Activated CD4-positive, alpha-beta T cell treated with anti-CD3 and anti-CD28 coated beads for 36 hours (primary cell): ENCODE measurements at regions of chr22 and their contacts with region 1.

Region 1: GRCh38 chr22:41857155-41857859 is 24.4 kb downstream of the SREBF2 start:
- DNase-seq: peak; percentile 89
- ATAC-seq: peak; percentile 71
- H3K4me3 Mint-ChIP-seq: no peak overlapping the region
- H3K27ac Mint-ChIP-seq: peak overlapping the region; percentile 95
- H3K4me1 Mint-ChIP-seq: peaks cover 76% of the 10 kb centered on the region
- H3K27me3 Mint-ChIP-seq: no peaks in the 10 kb centered on the region

Region 2: GRCh38 chr22:41800348-41801146 is 56.8 kb before region 1 on chr22 and contains the start of gene CCDC134:
- CTCF ChIA-PET with region 1: interaction called, 4 read pairs
- POLR2A ChIA-PET with region 1: interaction called, 8 read pairs
- intact Hi-C with region 1: loop called in 1 of 2 experiments (anchors 1 kb)
- DNase-seq: peak; percentile 95
- ATAC-seq: peak; percentile 98
- H3K4me3 Mint-ChIP-seq: peak within 1 kb of the TSS; percentile 91
- H3K27ac Mint-ChIP-seq: peak within 1 kb of the TSS; percentile 96
- H3K4me1 Mint-ChIP-seq: peaks cover 38% of the 10 kb centered on the region
- H3K27me3 Mint-ChIP-seq: no peaks in the 10 kb centered on the region
- total RNA-seq, gene CCDC134: 14.7 to 15.2 TPM

Region 3: DNA sequence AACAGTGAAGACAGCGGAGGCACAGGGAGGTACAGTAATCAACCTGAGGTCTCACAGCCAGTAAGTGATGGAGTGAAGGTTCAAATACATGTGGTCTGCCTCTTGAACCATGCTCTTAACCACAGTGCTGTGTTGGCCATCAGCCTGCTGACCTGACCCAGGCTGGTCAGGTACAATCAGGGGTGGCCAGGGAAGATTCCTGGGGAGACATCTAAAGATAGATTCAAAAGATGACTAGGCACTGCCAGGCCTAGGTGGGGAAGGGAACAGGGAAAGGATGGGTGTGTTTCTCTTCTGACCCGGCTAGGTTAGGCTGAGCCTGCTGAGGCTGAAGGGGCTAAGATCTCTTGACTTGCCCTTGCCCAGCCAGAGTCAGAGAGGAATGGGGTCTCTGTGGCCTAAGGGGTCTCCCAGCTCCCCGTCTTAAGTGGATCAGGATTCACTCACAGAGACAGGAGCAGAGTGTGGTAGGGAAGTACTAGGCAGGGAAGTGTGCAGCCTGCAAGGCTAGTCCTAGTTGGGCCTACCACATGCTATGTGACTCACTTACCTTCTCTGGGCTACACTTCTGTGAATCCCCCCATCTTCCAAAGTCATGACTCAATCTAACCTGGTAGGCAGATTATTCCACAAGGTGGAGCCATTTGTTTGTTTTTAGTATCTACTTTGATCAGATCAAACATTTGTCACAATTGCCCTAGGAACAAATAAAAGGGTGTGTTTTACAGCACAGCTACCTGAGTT is 34.8 kb before region 1 on chr22:
- CTCF ChIA-PET with region 1: interaction called, 17 read pairs
- POLR2A ChIA-PET with region 1: interaction called, 15 read pairs
- intact Hi-C with region 1: loop called (anchors 1 kb)
- DNase-seq: peak; percentile 57
- ATAC-seq: peak; percentile 97
- H3K4me3 Mint-ChIP-seq: no peak overlapping the region
- H3K27ac Mint-ChIP-seq: peak overlapping the region; percentile 87
- H3K4me1 Mint-ChIP-seq: peaks cover 36% of the 10 kb centered on the region
- H3K27me3 Mint-ChIP-seq: no peaks in the 10 kb centered on the region

Region 4: DNA sequence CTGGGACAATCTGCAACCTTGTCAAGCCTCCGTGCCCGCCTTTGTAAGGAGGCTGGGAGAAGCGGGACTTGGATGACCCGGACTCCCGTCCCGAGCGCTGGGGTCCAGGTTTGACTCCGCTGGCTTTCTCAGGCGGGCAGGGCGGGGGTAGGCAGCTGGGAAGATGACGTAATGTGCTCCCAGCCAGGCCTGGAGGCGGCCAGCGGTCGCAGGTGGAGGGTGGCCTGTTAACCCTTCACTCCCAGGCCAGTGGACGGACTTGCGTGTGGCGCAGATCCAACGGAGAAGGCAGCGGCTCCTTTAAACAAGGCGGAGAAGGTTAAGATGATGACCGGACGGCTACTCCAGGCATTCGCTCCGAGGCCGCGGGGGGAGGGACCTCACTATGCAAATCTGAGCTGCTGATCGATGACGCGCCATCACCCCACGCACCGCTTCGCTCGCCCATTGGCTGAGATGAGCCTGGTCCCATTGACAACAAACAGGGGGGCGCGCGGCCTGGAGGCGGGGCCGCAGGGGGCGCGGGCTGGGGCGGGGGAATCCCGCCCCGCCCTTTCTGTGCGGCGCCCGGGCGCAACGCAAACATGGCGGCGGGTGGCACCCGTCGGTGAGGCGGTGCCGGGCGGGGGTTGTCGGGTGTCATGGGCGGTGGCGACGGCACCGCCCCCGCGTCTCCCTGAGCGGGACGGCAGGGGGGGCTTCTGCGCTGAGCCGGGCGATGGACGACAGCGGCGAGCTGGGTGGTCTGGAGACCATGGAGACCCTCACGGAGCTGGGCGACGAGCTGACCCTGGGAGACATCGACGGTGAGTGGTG is 24.5 kb before region 1 on chr22 and contains the start of gene SREBF2:
- CTCF ChIA-PET with region 1: interaction called, 12 read pairs
- POLR2A ChIA-PET with region 1: interaction called, 54 read pairs
- intact Hi-C with region 1: loop called (anchors 1 kb)
- DNase-seq: peak; percentile 100
- ATAC-seq: peak; percentile 94
- H3K4me3 Mint-ChIP-seq: peak within 1 kb of the TSS; percentile 96
- H3K27ac Mint-ChIP-seq: peak within 1 kb of the TSS; percentile 99
- H3K4me1 Mint-ChIP-seq: peaks cover 45% of the 10 kb centered on the region
- H3K27me3 Mint-ChIP-seq: no peaks in the 10 kb centered on the region
- total RNA-seq, gene SREBF2: 101 to 105 TPM

Region 5: DNA sequence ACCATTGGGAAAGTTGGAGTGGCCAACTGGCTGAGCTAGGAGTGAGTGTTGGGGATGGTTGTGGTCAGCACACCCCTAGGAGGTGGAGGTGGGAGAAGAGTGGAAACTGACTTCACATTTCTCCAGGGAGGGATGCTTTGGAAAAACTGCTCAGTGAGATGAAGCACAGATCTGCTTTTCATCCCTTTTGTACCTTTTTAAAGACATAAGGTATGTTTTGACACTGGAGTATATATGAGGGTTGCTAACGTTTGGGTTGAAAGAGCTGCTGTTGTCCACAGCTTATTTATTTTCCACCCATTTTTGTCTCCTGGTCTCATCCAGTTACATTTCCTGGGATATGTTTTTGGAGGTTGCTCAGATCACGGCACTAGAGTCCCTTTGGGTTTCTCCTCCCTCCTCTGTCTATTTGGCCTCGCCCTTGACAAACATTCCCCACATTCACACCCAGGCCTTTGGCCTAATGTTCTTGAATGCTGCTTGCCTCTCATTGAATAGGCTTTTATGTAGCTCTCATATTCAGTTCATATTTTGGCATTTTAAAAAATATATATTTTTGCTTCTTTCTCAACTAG is 16.1 kb before region 1 on chr22:
- CTCF ChIA-PET with region 1: interaction called, 15 read pairs
- POLR2A ChIA-PET with region 1: interaction called, 24 read pairs
- intact Hi-C with region 1: loop called (anchors 1 kb)
- DNase-seq: no peak
- ATAC-seq: no peak
- H3K4me3 Mint-ChIP-seq: no peak overlapping the region
- H3K27ac Mint-ChIP-seq: no peak overlapping the region
- H3K4me1 Mint-ChIP-seq: peaks cover 84% of the 10 kb centered on the region
- H3K27me3 Mint-ChIP-seq: no peaks in the 10 kb centered on the region